ENCODE measurements at regions of chr16 and their contacts with region 1.

Region 1: DNA sequence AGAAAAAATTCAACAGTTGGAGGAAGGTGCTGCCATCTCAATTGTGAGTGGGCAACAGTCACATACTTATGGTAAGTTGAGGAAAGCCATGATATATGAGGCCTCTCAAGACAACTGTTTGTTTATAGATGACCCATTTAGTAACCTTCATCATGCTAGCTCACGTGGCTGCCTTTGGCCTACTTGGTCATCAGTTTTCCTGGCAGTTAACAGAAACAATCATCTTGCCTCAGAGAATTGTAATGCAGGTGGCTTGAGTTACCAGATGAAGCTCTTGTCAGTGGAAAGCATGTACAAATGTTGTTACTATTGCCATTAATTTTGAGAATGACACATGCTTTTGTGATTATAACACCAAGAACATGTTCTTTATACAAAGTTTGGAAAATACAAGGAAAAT is 14.7 kb downstream of the TPPP3 start:
- DNase-seq: no peak

Region 2: GRCh38 chr16:67349172-67349571 is 29.5 kb before region 1 on chr16:
- CTCF ChIA-PET with region 1: no interaction called
- POLR2A ChIA-PET with region 1: no interaction called
- DNase-seq: no peak

Region 3: DNA sequence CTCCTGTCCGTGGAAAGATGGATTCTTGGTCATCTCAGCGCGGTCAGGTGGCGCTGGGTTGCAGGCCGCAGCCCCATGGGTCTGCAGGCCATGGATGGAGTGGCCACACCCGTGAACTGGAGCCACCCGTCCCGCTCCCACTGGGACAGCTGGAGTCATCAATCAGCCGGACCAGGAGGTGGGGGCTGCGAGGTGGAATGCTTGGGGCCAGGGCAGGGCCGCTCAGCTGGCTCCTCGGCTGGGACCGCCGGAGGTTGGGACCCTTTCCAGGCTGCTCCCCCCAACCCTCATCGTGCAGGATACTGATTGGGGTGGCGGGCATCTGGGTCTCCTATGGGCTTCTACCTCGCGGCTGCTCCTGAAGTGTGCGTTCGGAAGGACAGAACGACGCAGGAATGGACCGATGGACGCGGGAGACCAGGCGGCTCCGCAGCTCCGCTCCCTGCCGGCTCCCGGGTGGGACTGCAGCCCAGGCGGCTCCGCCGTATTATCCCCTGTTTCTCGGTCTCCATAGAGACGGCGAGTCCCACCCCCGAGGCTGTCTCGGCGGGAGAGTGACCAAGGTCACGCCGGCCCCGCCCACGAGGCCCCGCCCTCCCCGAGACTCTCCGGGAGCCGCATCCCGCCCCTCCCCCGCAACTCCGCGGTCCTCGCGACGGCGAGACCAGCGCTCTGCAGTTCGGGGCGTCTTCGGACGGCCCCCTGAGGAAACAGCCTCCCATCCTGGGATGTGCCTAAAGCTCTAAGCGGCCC is 14.6 kb after region 1 on chr16 and contains the start of gene TPPP3:
- CTCF ChIA-PET with region 1: interaction called, 16 read pairs
- POLR2A ChIA-PET with region 1: interaction called, 6 read pairs
- DNase-seq: peak; percentile 94

Region 4: GRCh38 chr16:67571981-67572431 is 193.4 kb after region 1 on chr16:
- CTCF ChIA-PET with region 1: no interaction called
- POLR2A ChIA-PET with region 1: no interaction called
- DNase-seq: no peak

Measured in HEK293T (cell line).